ENCODE measurements at regions of chr1 and their contacts with region 1.

Region 1: DNA sequence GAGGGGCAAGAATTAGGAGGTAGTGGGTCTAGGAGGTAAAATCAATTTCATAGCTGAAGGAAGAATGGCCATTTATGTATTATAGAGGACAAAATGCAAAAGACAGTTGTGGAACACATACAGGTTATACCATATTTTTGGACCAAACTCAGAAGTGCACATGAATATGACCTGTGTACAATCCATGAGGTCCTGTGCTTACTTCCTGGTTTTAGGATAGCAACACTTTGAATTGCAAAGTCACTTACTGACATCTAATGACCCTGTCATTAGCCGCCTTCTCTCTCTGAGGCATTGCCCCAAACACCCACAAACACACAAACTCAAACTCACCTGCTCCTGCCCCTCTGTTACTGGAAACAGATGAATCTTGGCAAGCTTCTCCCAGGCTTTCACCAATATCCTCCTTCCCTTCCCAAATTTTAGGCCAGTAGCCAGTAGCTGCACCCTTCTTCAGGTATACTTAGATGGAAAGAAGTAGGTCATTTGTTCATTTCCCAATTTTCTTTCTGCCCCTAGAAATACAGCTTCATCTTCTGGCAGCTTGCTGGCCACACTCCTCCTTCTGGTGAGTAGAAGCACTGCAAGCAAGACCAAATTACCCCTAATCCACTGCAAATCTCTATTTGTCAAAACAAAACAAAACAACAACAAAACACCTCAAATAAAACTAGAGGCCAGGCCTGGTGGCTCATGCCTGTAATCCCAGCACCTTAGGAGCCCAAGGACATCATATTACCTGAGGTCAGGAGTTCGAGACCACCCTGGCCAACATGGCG is 13.7 kb upstream of the RPL5 start:
- DNase-seq: peak in 1 of 4 donors; percentile 25
- ATAC-seq: peak; percentile 62
- H3K4me3 ChIP-seq: no peak overlapping the region
- H3K27ac ChIP-seq: no peak overlapping the region
- H3K4me1 ChIP-seq: no peaks in the 10 kb centered on the region
- H3K27me3 ChIP-seq: no peaks in the 10 kb centered on the region
- CTCF ChIP-seq: peak; percentile 61 to 65

Region 2: DNA sequence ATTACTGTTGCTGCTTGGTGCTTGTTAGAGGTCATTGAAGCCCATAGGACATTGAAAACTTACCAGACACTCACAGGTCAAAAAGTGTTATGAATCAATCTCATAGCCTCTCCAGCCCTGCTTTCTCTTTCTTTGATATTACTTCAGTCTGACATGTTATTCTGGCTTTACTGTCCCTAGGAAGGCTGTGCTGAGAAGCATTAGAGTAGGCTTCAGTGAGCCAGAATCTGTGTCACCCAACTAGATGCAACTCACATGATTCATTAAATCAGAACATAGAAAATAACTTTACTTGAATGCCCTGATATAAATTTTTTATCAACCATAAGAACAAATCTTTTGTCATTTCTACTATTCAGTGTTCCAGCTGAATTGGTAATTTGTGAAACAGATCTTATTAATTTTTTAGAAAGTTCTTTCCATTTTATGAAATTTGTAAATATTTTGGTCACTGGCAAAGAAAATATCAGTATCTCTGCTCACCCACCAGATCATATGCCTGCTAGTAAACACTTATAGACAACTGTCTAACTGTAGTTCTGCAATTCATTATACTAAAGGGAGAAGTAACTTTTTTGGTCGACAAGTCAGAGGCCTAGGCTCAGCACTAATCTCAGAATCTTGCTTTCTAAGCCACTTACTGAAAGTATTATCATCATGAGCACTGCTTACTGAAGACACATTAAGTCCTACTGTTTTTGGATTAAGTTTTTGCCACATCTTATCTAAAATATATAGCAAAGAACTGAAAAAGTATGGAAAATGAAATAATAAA is 471.1 kb before region 1 on chr1:
- intact Hi-C with region 1: no loop called
- DNase-seq: no peak
- ATAC-seq: no peak
- H3K4me3 ChIP-seq: no peak overlapping the region
- H3K27ac ChIP-seq: no peak overlapping the region
- H3K4me1 ChIP-seq: no peaks in the 10 kb centered on the region
- H3K27me3 ChIP-seq: no peaks in the 10 kb centered on the region
- CTCF ChIP-seq: no peak

Region 3: GRCh38 chr1:92754000-92754718 is 64.0 kb before region 1 on chr1:
- intact Hi-C with region 1: loop called in 1 of 2 experiments (anchors 10 kb)
- DNase-seq: no peak
- ATAC-seq: peak; percentile 22
- H3K4me3 ChIP-seq: no peak overlapping the region
- H3K27ac ChIP-seq: no peak overlapping the region
- H3K4me1 ChIP-seq: no peaks in the 10 kb centered on the region
- H3K27me3 ChIP-seq: no peaks in the 10 kb centered on the region
- CTCF ChIP-seq: no peak

Region 4: DNA sequence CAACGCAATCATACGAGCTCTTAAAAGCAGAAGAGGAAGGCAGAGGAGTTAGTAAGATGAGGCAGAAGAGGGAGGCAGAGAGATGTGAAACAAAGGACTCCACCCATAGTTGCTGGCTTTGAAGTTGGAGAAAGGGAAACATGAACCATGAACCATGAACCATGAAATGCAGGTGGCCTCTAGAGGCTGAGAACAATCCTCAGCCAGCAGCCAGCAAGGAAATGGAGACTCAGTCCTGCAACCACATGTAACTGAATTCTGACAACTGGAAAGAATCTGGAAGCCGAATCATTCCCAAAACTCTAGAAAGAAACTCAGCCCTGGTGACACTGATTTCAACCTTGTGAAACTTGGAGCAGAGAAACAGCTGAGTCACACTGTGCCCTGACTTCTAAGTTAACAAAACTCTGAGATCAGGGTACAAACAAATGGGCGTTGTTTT is 133.0 kb after region 1 on chr1:
- intact Hi-C with region 1: no loop called
- DNase-seq: no peak
- ATAC-seq: peak; percentile 48
- H3K4me3 ChIP-seq: no peak overlapping the region
- H3K27ac ChIP-seq: peak overlapping the region in 1 of 2 donors; percentile 51
- H3K4me1 ChIP-seq: peaks cover 0 to 20% of the 10 kb centered on the region in 2 donors
- H3K27me3 ChIP-seq: no peaks in the 10 kb centered on the region
- CTCF ChIP-seq: no peak

Region 5: GRCh38 chr1:93143136-93143535 is 325.0 kb after region 1 on chr1:
- intact Hi-C with region 1: no loop called
- DNase-seq: no peak
- ATAC-seq: peak; percentile 57
- H3K4me3 ChIP-seq: no peak overlapping the region
- H3K27ac ChIP-seq: no peak overlapping the region
- H3K4me1 ChIP-seq: no peaks in the 10 kb centered on the region
- H3K27me3 ChIP-seq: no peaks in the 10 kb centered on the region
- CTCF ChIP-seq: no peak

Measured in left lung (tissue), 14 donors.